Activated T-helper 2 cell treated with anti-CD3 and anti-CD28 coated beads, Interferon-gamma antibody, Interleukin-2, Interleukin-4, amounts not matched to agents 10 μg/mL and 5 μg/mL and 100 μg/mL, durations not matched to agents 14 hours and 24 hours and 36 hours (primary cell): ENCODE measurements at regions of chr7 and their contacts with region 1.

Region 1: DNA sequence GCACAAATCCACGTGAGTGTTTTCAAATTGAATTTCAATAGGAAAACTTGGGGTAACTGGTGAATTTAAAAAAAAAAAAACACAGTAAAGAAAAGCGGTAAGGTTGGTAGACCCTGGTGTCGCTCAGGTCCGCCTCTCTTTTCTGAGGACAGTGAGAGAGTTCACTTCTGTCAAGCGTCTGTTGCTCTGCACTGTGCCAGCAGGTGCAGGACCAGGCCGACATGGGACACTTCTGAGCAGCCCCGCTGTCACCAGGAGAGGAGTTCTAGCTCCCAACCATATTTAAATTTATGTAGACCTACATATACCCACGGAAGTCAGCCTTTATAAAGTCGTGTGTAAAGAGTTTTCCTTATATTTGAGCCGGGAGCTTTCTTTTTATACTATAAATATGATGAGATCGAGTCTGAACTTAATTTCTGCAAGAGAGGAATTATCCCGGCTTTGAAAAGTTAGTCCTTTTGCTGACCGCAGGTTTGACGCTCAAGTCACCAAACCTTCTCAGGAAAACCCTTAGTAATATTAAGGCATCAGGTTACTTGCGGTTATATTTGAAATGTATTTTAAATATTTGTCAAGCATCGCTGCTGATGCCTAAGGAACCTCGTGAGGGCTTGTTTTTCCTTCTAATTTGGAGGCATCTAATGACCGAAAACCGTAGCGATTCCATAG is 531 bp downstream of the IKZF1 start:
- DNase-seq: peak; percentile 56
- H3K4me3 Mint-ChIP-seq: peak overlapping the region; percentile 99
- H3K27ac Mint-ChIP-seq: peak overlapping the region; percentile 98
- H3K4me1 Mint-ChIP-seq: peaks cover 31% of the 10 kb centered on the region
- H3K27me3 Mint-ChIP-seq: no peaks in the 10 kb centered on the region

Region 2: GRCh38 chr7:50125766-50126165 is 179.3 kb before region 1 on chr7:
- intact Hi-C with region 1: no loop called
- DNase-seq: no peak
- H3K4me3 Mint-ChIP-seq: no peak overlapping the region
- H3K27ac Mint-ChIP-seq: no peak overlapping the region
- H3K4me1 Mint-ChIP-seq: peaks cover 6% of the 10 kb centered on the region
- H3K27me3 Mint-ChIP-seq: peaks cover 14% of the 10 kb centered on the region

Region 3: DNA sequence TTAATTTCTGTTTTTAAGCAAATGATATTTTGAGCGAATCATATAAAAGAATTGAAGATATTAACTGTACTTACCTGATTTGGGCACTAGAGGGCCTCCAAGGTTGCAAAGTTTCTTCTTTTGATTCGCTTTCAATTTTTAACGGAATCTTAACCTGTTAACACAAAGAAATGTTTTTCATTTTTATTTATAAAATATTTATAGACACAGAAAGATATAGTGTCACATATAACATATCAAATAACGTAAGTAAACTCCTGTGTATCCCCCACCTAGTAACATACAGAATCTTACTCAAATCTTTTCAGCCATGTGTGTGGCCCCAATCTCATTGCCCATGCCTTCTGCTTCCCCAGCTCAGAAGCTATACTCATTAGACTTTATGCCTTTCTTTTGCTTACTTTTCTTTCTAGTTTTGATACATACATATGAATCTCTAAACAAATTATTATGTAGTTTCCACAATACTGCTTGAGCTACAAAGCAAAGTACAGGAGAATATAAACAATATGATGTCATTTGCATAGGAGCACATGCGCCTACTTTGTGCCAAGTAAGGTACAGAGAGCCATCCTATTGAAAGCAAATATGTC is 162.5 kb before region 1 on chr7:
- intact Hi-C with region 1: loop called (anchors 1 kb)
- DNase-seq: no peak
- H3K4me3 Mint-ChIP-seq: peak overlapping the region; percentile 30
- H3K27ac Mint-ChIP-seq: peak overlapping the region; percentile 77
- H3K4me1 Mint-ChIP-seq: peaks cover 44% of the 10 kb centered on the region
- H3K27me3 Mint-ChIP-seq: peaks cover 2% of the 10 kb centered on the region

Region 4: DNA sequence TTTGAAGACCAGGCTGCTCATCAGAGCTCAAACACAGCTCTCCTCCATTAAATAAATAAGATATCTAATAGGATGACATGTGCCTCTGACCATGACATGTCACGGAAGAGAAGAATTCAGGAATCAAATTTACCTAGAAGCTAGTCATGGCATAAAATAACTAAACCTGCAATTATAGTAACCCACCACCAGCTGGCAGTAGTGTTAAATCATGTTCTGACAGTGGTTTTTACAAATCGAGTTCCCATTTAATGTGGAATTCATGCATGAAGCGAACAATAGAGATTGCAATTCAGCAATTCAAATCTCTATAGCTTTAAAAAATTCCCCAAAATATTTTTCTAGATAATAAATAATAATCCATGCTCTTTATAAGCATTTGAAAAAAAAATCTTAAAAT is 75.1 kb before region 1 on chr7:
- intact Hi-C with region 1: loop called (anchors 5 kb)
- DNase-seq: no peak
- H3K4me3 Mint-ChIP-seq: no peak overlapping the region
- H3K27ac Mint-ChIP-seq: no peak overlapping the region
- H3K4me1 Mint-ChIP-seq: peaks cover 38% of the 10 kb centered on the region
- H3K27me3 Mint-ChIP-seq: no peaks in the 10 kb centered on the region

Region 5: DNA sequence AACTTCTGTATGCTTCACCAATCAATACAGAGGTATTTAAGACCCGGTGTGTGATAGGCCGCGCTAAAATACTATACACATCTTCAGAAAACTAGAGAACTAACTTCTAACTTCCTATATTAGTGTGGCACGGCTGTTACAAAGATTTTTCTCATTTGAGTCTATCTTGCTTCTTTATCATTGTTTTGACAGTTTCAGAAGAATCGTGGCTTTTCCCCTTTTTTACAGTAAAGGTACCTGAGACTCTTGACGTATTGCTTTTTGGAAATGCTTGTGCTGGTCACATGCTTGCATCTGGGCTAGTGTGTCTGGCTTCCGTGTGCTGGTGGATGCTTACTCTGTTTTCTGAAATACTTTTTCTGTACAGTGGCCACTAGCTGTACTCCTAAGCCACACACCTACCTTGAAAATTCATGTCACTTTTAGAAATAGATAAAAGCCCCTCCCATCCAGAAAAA is 12.2 kb after region 1 on chr7:
- intact Hi-C with region 1: loop called (anchors 1 kb)
- DNase-seq: peak; percentile 52
- H3K4me3 Mint-ChIP-seq: peak overlapping the region; percentile 78
- H3K27ac Mint-ChIP-seq: peak overlapping the region; percentile 92
- H3K4me1 Mint-ChIP-seq: peaks cover 90% of the 10 kb centered on the region
- H3K27me3 Mint-ChIP-seq: no peaks in the 10 kb centered on the region

Region 6: GRCh38 chr7:50349963-50350944 is 45.2 kb after region 1 on chr7:
- intact Hi-C with region 1: loop called (anchors 1 kb)
- DNase-seq: peak; percentile 80
- H3K4me3 Mint-ChIP-seq: peak overlapping the region; percentile 49
- H3K27ac Mint-ChIP-seq: peak overlapping the region; percentile 91
- H3K4me1 Mint-ChIP-seq: peaks cover 96% of the 10 kb centered on the region
- H3K27me3 Mint-ChIP-seq: no peaks in the 10 kb centered on the region

Region 7: DNA sequence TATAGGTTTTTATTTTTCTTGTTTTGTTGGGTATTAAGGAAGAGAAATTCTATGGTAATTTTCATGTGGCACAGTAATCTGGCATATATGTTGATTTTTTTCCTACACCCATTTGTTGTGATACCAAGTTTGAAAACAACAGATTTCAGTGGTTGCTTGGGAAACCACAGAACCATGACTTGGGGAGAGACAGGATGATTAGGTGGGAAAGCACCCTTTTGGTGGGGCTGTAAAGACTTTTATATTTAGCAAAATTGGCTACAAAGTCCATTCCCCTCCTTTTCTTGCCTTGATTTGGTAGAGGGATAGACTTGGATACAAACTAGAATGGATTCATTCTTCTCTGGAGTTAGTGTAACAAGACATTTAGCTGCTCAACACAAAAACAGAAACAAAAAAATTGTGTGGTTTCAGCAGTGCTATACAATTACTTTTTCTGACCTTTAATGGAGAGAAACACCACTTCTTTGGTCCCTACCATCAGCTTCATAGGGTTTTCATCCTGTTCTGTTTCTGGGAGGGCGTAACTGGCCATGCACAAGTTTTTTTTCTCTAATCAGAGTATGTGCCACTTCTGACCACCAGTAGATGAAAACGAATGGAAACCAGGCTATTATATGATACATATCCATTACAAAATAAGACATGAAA is 92.4 kb after region 1 on chr7:
- intact Hi-C with region 1: loop called (anchors 1 kb)
- DNase-seq: no peak
- H3K4me3 Mint-ChIP-seq: no peak overlapping the region
- H3K27ac Mint-ChIP-seq: peak overlapping the region; percentile 94
- H3K4me1 Mint-ChIP-seq: peaks cover 62% of the 10 kb centered on the region
- H3K27me3 Mint-ChIP-seq: no peaks in the 10 kb centered on the region